ENCODE measurements at regions of chr3 and their contacts with region 1.

Region 1: GRCh38 chr3:160565442-160566403 is at the start of gene KPNA4:
- DNase-seq: peak; percentile 97 to 98
- H3K4me3 ChIP-seq: peak within 1 kb of the TSS; percentile 50
- H3K4me3 Mint-ChIP-seq: peak within 1 kb of the TSS; percentile 88
- H3K27ac Mint-ChIP-seq: peak within 1 kb of the TSS; percentile 90
- H3K4me1 ChIP-seq: peaks cover 6% of the 10 kb centered on the region
- H3K4me1 Mint-ChIP-seq: peaks cover 16% of the 10 kb centered on the region
- H3K27me3 ChIP-seq: no peaks in the 10 kb centered on the region
- H3K27me3 Mint-ChIP-seq: no peaks in the 10 kb centered on the region
- CTCF ChIP-seq: no peak
- total RNA-seq, gene KPNA4: 53.5 and 60.5 TPM in 2 replicates

Region 2: DNA sequence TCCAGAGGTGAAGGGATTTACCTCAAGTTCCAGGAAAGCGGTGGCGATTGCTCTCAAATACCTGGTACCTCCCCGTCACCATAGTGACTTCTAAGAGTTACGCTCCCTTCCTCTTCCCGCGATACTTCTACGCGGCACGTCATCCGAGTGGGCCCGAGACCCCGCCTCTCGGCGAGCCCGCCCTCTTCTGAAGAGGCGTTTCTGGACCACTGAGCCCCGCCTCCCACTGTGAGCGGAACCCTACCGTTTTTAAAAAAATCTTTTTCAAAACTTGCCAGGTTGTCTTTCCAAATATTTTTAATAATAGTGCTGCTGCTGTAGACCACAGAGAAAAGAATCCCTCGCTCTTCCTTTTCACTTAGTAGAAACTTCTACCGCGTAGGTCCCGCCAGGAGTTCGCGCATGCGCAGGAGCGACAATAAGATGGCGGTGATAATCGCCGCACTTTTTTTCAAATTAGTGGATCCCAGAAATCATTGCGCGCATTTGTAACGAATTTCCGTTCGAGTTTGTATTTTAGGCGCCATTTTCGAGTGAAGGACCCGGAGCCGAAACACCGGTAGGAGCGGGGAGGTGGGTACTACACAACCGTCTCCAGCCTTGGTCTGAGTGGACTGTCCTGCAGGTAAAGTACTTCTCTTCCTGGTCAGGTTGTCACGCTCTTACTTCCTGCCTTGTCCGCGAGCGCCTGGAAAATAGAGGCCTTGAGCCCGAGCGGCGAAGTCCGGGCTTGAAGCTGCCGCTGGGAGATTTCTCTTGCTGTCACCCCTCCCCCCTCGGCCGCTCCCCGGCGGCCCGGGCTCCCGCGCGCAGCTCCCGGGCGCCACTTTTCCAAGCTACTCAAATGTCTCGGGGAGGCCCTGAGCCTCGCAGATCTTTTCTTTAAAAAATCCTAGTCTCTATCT is 166.3 kb before region 1 on chr3 and contains the starts of genes IFT80 and SMC4:
- CTCF ChIA-PET with region 1: no interaction called
- POLR2A ChIA-PET with region 1: interaction called, 12 read pairs
- intact Hi-C with region 1: no loop called
- DNase-seq: peak; percentile 95 to 96
- H3K4me3 ChIP-seq: peak within 1 kb of the TSS; percentile 96
- H3K4me3 Mint-ChIP-seq: peak within 1 kb of the TSS; percentile 97
- H3K27ac Mint-ChIP-seq: peak within 1 kb of the TSS; percentile 99
- H3K4me1 ChIP-seq: peaks cover 10% of the 10 kb centered on the region
- H3K4me1 Mint-ChIP-seq: peaks cover 6% of the 10 kb centered on the region
- H3K27me3 ChIP-seq: no peaks in the 10 kb centered on the region
- H3K27me3 Mint-ChIP-seq: no peaks in the 10 kb centered on the region
- CTCF ChIP-seq: no peak
- total RNA-seq, gene IFT80: 19.3 and 24.9 TPM in 2 replicates
- total RNA-seq, gene SMC4: 133 and 136 TPM in 2 replicates

Region 3: DNA sequence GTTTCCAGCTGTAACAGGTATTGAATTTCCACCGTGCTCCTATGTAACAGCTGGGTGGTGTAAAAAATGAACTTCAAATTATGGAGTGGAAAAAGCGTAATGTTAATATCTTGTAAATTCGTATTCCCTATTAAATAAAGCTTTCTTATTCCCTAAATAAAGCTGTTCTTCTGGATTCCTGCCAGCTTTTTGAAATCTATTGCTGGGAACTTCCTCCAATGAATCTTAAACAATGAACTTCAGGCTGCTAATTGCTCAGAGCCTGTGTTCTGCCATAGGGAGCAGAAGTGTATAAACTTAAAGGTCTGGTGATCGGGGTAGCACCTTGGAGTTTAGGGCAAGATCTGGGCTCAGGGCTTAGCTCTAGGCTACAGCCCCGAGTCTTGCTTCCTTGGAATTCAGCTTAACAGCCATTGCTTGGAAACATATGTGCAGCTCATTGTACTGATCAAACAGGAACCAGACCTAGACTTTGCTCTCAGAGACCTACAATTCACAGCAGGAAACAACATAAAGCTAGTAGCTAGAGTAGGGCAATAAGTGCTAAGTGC is 112.6 kb after region 1 on chr3:
- CTCF ChIA-PET with region 1: no interaction called
- POLR2A ChIA-PET with region 1: interaction called, 3 read pairs
- intact Hi-C with region 1: loop called (anchors 2 kb)
- DNase-seq: peak; percentile 36 to 40
- H3K4me3 ChIP-seq: 0 out of 2 replicates have a peak overlapping the region, but pooled peaks have one; percentile 8
- H3K4me3 Mint-ChIP-seq: peak overlapping the region; percentile 65
- H3K27ac Mint-ChIP-seq: peak overlapping the region; percentile 81
- H3K4me1 ChIP-seq: peaks cover 51% of the 10 kb centered on the region
- H3K4me1 Mint-ChIP-seq: peaks cover 51% of the 10 kb centered on the region
- H3K27me3 ChIP-seq: no peaks in the 10 kb centered on the region
- H3K27me3 Mint-ChIP-seq: no peaks in the 10 kb centered on the region
- CTCF ChIP-seq: no peak

Region 4: GRCh38 chr3:160869818-160870217 is 304.1 kb after region 1 on chr3:
- CTCF ChIA-PET with region 1: no interaction called
- POLR2A ChIA-PET with region 1: no interaction called
- intact Hi-C with region 1: no loop called
- DNase-seq: peak in 1 of 2 experiments; percentile 38
- H3K4me3 ChIP-seq: no peak overlapping the region
- H3K4me3 Mint-ChIP-seq: peak overlapping the region; percentile 23
- H3K27ac Mint-ChIP-seq: no peak overlapping the region
- H3K4me1 ChIP-seq: no peaks in the 10 kb centered on the region
- H3K4me1 Mint-ChIP-seq: no peaks in the 10 kb centered on the region
- H3K27me3 ChIP-seq: no peaks in the 10 kb centered on the region
- H3K27me3 Mint-ChIP-seq: peaks cover 3% of the 10 kb centered on the region
- CTCF ChIP-seq: no peak